ENCODE measurements at regions of chr10 and their contacts with region 1.

Region 1: DNA sequence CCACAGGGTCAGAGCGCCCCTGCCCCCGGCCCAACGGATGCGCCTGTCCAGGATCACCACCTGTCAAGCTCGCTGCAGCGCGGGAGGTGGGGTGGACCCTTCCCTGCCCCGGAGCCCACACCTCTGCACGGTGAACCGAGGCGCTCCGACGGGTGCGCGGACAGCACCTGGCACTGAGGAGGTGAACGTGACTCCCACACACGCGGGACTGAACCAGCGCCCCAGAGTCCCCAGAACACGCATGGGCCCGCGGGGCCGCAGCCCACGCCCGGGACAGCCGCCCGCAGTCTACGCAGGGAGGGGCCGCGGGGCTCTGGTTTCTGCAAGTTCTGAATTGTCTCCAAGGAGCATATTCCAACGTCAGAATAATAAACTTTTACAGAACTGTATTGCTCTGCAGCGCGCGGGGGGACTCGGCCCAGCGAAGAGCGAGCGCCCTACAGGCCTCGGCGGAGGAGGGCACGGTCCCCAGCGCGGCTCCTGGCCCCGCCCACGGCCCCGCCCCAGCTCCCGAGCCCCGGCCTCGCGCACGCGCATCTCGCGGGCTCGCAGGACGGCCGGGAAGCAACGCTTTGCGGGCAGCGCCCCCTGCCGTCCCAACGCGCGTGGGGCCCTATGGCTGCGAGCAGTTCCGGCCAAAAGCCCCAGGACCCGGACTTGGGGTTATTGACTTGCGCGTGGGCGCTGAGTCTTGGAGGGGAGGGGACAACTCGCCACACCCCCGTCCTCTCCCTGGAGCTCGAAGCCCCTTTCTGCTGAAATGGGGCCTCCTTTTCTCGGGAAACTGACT is 29.7 kb downstream of the OAT start:
- DNase-seq: peak; percentile 83
- H3K4me3 ChIP-seq: peak overlapping the region; percentile 24 to 36 (median 29)
- H3K27ac ChIP-seq: no peak overlapping the region
- H3K4me1 ChIP-seq: no peaks in the 10 kb centered on the region
- H3K27me3 ChIP-seq: no peaks in the 10 kb centered on the region
- CTCF ChIP-seq: peak; percentile 89 to 95
- POLR2A ChIP-seq: no peak

Region 2: DNA sequence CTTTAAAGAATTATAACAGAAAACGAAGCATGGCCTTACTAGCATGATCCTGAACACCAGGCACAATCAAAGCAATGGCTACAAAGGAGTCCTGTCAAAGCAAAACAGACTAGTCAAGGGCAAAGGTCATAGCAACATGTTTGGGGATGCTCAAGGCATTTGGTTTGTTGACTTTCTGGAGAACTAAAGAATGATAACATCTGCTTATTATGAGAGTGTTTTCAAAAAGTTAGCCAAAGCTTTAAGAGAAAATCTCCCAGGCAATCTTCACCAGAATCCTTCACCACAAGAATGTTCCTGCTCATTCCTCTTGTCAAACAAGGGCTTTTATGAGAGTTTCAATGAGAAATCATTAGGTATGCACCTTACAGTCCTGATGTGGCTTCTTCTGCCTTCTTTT is 402.3 kb before region 1 on chr10:
- CTCF ChIA-PET with region 1: interaction called, 15 read pairs
- POLR2A ChIA-PET with region 1: no interaction called
- dilution Hi-C with region 1: no loop called
- intact Hi-C with region 1: no loop called
- DNase-seq: no peak
- H3K4me3 ChIP-seq: no peak overlapping the region
- H3K27ac ChIP-seq: no peak overlapping the region
- H3K4me1 ChIP-seq: no peaks in the 10 kb centered on the region
- H3K27me3 ChIP-seq: peaks cover 10 to 13% of the 10 kb centered on the region in 2 experiments
- CTCF ChIP-seq: no peak
- POLR2A ChIP-seq: no peak

Region 3: DNA sequence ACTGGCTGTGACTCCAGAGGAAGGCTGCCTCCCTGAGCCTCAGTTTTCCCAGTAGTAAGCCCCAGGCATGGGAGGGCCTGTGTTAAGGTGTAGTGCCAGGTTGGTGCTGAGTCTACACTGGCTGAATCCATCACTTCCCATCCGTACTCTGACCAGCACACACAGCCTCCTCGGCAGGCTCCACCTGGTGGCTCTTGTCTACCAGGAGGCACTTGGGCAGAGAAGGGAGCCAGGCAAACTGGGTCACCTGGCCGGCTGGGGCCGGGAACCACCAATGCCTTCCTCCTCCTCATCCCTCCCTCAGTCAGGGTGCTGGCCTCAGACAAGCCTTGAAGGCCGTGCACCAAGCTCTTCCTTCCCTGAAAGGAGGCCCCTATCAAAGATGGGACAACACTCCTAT is 371.3 kb before region 1 on chr10:
- CTCF ChIA-PET with region 1: interaction called, 15 read pairs
- POLR2A ChIA-PET with region 1: no interaction called
- dilution Hi-C with region 1: no loop called
- intact Hi-C with region 1: no loop called
- DNase-seq: no peak
- H3K4me3 ChIP-seq: no peak overlapping the region
- H3K27ac ChIP-seq: no peak overlapping the region
- H3K4me1 ChIP-seq: no peaks in the 10 kb centered on the region
- H3K27me3 ChIP-seq: no peaks in the 10 kb centered on the region
- CTCF ChIP-seq: no peak
- POLR2A ChIP-seq: no peak

Region 4: DNA sequence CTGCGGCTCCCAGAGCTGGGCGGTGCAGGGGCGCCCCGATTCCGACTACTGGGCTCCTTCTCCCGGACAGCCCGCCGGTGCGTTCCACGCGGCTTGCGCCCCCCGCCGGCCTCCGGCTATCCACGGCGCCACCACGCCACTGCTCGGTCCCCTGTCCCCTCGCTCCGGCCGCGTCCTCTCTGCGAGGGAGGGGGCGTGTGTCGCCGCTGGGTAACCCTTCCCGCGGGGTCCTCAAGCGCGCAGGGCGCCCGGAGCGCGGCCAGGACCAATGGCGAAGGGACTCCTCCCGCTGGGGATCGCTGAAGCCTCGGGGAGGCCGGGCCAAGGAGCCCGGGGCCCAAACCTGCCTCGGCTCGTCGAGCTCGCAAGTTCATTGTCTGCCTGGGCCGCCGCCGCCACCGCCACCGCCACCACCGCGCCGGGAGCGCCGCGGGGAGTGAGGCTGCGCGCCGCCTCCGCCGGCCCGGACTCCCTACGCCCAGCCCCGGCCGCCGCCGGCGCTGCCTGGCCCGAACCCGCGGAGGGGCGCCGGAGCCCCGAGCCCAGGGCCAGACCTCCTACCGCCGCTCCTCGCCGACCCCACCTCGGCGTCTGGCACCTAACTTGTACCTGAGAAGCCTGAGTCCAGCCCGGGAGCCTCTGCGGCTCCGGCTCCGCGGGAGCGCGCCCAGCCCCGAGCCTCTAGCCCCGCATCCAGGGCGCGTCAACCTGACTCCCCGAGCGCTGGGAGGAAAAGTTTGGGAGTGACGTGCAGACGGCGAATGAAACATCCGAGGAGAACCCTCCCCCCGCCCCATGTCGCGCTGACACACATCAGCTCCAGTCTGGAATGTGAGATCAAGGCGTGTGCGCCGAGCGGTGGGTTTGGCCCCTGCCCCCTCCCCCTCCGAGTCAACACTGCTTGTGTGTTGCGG is 295.9 kb before region 1 on chr10 and contains the start of gene CHST15:
- CTCF ChIA-PET with region 1: interaction called, 26 read pairs
- POLR2A ChIA-PET with region 1: no interaction called
- dilution Hi-C with region 1: no loop called
- intact Hi-C with region 1: loop called (anchors 1 kb)
- DNase-seq: peak; percentile 63
- H3K4me3 ChIP-seq: peak within 1 kb of the TSS; percentile 21 to 75 (median 25)
- H3K27ac ChIP-seq: no peak within 1 kb of the TSS
- H3K4me1 ChIP-seq: peaks cover 6% of the 10 kb centered on the region
- H3K27me3 ChIP-seq: peaks cover 4 to 47% of the 10 kb centered on the region in 2 experiments
- CTCF ChIP-seq: peak in 1 of 2 donors; percentile 29
- POLR2A ChIP-seq: no peak
- total RNA-seq, gene CHST15: 23.1 and 29.2 TPM in 2 replicates

Region 5: GRCh38 chr10:124152916-124153826 is 235.8 kb before region 1 on chr10:
- CTCF ChIA-PET with region 1: interaction called, 10 read pairs
- POLR2A ChIA-PET with region 1: no interaction called
- dilution Hi-C with region 1: no loop called
- intact Hi-C with region 1: no loop called
- DNase-seq: peak; percentile 89
- H3K4me3 ChIP-seq: no peak overlapping the region
- H3K27ac ChIP-seq: peak overlapping the region; percentile 4
- H3K4me1 ChIP-seq: peaks cover 27% of the 10 kb centered on the region
- H3K27me3 ChIP-seq: no peaks in the 10 kb centered on the region
- CTCF ChIP-seq: no peak
- POLR2A ChIP-seq: no peak

Region 6: GRCh38 chr10:124369986-124370385 is 19.0 kb before region 1 on chr10:
- CTCF ChIA-PET with region 1: interaction called, 16 read pairs
- POLR2A ChIA-PET with region 1: no interaction called
- dilution Hi-C with region 1: no loop called
- intact Hi-C with region 1: no loop called
- DNase-seq: no peak
- H3K4me3 ChIP-seq: no peak overlapping the region
- H3K27ac ChIP-seq: no peak overlapping the region
- H3K4me1 ChIP-seq: no peaks in the 10 kb centered on the region
- H3K27me3 ChIP-seq: no peaks in the 10 kb centered on the region
- CTCF ChIP-seq: no peak
- POLR2A ChIP-seq: no peak

Region 7: GRCh38 chr10:124418726-124419501 is 29.9 kb after region 1 on chr10 and contains the start of gene OAT:
- CTCF ChIA-PET with region 1: interaction called, 16 read pairs
- POLR2A ChIA-PET with region 1: no interaction called
- dilution Hi-C with region 1: no loop called
- intact Hi-C with region 1: no loop called
- DNase-seq: peak; percentile 96
- H3K4me3 ChIP-seq: peak within 1 kb of the TSS; percentile 75 to 86 (median 77)
- H3K27ac ChIP-seq: peak within 1 kb of the TSS; percentile 55
- H3K4me1 ChIP-seq: peaks cover 2% of the 10 kb centered on the region
- H3K27me3 ChIP-seq: peaks cover 0 to 6% of the 10 kb centered on the region in 2 experiments
- CTCF ChIP-seq: peak in 1 of 2 donors; percentile 31
- POLR2A ChIP-seq: peak; percentile 99
- total RNA-seq, gene OAT: 90.1 and 90.8 TPM in 2 replicates